PC-3 (cell line): ENCODE measurements at regions of chr1 and their contacts with region 1.

Region 1: DNA sequence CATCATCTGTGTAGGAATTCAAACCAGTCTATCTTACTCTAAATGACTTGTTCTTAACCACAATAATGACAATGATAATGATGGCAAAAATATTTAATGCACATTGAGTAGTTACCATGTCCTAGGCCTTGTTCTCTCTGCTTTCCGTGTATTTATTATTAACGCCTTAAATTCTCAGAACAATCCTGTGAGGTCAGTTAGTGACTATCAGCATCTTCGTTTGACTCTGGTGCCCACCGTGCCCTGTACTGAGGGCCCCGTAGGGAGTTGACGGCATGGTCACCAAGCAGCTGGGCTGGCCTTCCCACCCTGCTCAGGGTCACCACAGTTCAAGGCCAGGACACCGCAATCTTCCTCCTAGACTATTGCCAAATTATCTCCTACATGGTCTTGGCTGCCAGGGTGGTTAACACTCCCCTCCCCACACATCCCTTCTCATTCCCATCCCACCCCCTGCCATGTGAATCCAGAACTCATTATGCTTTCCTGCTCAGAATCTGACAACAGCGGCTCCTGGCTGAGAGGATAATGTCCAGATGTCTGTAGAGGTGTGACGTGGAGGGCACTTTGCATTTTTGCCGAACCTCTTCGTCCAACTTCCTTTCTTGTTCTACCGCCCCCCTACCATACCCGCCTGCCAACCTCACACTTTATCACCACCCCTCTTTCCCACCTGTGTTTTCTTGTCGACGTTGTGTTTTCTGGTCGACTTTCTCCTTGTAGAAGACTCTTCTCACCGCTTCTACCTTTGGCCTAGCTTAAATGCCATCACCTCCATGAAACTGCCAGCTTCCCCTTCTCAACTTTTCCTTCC is 33.4 kb downstream of the IGFN1 start:
- DNase-seq: no peak
- ATAC-seq: no peak
- H3K4me3 ChIP-seq: no peak overlapping the region
- H3K27ac ChIP-seq: no peak overlapping the region
- H3K4me1 ChIP-seq: peaks cover 3% of the 10 kb centered on the region
- H3K27me3 ChIP-seq: no peaks in the 10 kb centered on the region
- CTCF ChIP-seq: no peak

Region 2: GRCh38 chr1:200653022-200653462 is 571.0 kb before region 1 on chr1:
- CTCF ChIA-PET with region 1: no interaction called
- POLR2A ChIA-PET with region 1: no interaction called
- intact Hi-C with region 1: no loop called
- DNase-seq: no peak
- ATAC-seq: no peak
- H3K4me3 ChIP-seq: no peak overlapping the region
- H3K27ac ChIP-seq: no peak overlapping the region
- H3K4me1 ChIP-seq: peaks cover 13% of the 10 kb centered on the region
- H3K27me3 ChIP-seq: no peaks in the 10 kb centered on the region
- CTCF ChIP-seq: no peak

Region 3: DNA sequence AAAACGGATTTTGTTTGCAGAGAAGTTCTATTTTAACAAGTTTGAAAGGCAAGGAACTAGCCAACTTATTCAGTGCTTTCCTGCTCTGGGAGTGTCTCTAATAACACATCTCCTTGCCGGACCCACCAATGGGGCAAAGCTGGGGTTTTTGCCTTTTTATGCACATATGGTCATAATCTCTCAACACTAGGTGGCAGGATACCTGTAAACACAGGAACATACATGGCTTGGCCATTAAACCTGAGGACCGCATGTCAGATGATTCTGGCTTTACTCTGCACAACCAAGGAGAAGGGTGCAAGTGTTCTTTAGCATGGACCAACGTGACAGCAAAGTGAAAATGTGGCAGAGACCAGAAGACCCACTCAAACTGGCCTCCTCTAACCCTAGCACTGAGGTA is 74.7 kb before region 1 on chr1:
- CTCF ChIA-PET with region 1: interaction called, 15 read pairs
- POLR2A ChIA-PET with region 1: no interaction called
- intact Hi-C with region 1: loop called (anchors 1 kb)
- DNase-seq: peak; percentile 94
- ATAC-seq: peak; percentile 48
- H3K4me3 ChIP-seq: no peak overlapping the region
- H3K27ac ChIP-seq: no peak overlapping the region
- H3K4me1 ChIP-seq: peaks cover 15% of the 10 kb centered on the region
- H3K27me3 ChIP-seq: no peaks in the 10 kb centered on the region
- CTCF ChIP-seq: peak; percentile 99

Region 4: GRCh38 chr1:201309426-201309825 is 85.4 kb after region 1 on chr1:
- CTCF ChIA-PET with region 1: no interaction called
- POLR2A ChIA-PET with region 1: no interaction called
- intact Hi-C with region 1: no loop called
- DNase-seq: peak; percentile 100
- ATAC-seq: peak; percentile 37
- H3K4me3 ChIP-seq: 0 out of 2 replicates have a peak overlapping the region, but pooled peaks have one; percentile 1
- H3K27ac ChIP-seq: peak overlapping the region; percentile 89
- H3K4me1 ChIP-seq: peaks cover 72% of the 10 kb centered on the region
- H3K27me3 ChIP-seq: no peaks in the 10 kb centered on the region
- CTCF ChIP-seq: peak; percentile 81